GM10248 (cell line): ENCODE measurements at regions of chr1 and their contacts with region 1.

Region 1: DNA sequence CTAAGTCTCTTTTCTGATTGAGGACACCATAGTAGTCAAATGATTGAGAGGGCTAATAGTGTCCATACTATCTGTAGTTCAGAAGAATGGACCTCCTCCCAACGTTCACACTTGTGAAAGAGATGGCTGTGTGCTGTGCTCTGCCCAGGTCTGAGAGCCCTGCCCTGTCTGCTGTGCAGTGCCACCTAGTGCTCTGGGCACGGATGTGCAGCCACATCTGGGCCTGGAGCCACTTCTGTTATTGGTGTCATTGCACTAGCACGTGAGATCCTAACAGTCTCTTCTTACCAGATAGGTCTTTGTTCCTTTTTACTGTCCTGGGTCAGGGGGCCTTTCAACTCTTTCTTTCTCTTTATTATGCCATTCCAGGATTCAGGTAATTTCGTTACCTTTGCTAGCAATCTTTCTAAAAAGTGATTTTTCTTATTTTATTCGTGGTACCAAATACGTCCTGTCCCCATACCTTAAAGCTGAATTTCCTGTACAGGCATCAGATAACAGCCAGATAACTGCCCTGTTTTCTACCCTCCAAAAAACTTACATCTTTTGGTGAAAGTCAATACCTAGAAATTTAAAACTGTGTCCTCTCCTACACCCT is 21.7 kb downstream of the INTS3 start:
- DNase-seq: peak; percentile 87
- CTCF ChIP-seq: peak; percentile 96

Region 2: GRCh38 chr1:153677718-153678505 is 71.6 kb before region 1 on chr1:
- CTCF ChIA-PET with region 1: interaction called, 18 read pairs
- POLR2A ChIA-PET with region 1: no interaction called
- DNase-seq: peak; percentile 77
- CTCF ChIP-seq: peak; percentile 89

Region 3: DNA sequence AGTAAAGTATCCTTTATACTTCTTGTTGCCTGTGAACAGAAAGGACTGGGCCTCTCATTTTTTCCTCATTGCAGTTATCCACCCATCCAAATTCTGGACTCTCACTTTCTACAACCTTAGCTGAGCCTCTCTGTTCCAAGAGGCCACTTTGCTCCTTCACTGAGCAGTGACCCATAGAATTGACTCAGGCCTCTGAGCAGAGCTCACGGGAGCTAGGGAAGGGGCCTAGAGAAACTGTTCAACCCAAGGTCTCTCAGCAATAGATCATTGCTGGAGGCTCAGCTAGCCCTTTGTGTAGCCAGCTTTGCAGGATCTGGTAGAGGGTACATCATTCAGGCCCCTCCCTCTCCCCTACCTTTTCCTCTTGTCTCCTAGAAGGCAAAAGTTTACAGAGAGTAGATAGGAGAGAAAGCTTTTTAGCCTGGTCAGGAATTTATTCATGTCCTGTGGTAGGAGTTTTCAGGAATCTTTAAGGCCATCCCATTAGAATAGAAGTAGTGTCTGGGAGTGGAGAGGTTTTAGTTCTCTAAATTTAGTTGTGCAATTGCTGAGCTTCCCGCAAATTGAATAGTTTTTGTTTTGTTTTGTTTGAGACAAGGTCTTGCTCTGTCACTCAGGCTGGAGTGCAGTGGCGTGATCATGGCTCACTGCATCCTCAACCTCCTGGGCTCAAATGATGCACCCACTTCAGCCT is 15.0 kb before region 1 on chr1:
- CTCF ChIA-PET with region 1: interaction called, 27 read pairs
- POLR2A ChIA-PET with region 1: interaction called, 6 read pairs
- DNase-seq: no peak
- CTCF ChIP-seq: no peak